ENCODE measurements at regions of chr7 and their contacts with region 1.

Region 1: GRCh38 chr7:151351027-151351426 is 9.4 kb downstream of the NUB1 start:
- DNase-seq: no peak

Region 2: DNA sequence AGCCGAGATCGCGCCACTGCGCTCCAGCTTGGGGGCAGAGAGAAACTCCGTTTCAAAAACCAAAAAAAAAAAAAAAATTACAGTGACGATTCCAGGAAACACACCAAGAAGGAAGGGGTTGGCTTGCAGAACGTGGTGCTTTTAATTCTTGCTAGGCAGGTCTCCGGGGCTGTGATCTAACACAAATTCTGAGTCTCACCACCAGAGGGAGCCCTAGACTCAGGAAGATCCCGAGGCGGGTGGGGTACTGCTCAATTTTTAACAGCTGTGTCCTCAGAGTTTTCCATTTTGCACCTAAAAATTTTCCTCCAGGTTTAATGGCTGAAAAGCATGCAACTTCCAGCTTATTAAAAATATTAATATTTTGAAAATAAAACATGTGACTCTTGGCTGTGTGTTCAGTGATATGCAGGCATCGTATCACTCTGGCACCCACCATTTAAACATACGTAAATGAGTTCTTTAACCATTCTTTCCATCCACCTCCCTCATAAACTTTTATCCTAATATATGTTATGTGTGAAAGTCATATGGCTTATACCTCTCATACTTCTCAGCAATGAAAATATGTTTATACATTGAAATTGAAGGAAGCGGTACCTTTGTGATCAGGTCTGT is 35.9 kb before region 1 on chr7:
- intact Hi-C with region 1: loop called (anchors 1 kb)
- DNase-seq: peak in 9 of 10 donors; percentile 36 to 92 (median 73)